GM10248 (cell line): ENCODE measurements at regions of chr3 and their contacts with region 1.

Region 1: DNA sequence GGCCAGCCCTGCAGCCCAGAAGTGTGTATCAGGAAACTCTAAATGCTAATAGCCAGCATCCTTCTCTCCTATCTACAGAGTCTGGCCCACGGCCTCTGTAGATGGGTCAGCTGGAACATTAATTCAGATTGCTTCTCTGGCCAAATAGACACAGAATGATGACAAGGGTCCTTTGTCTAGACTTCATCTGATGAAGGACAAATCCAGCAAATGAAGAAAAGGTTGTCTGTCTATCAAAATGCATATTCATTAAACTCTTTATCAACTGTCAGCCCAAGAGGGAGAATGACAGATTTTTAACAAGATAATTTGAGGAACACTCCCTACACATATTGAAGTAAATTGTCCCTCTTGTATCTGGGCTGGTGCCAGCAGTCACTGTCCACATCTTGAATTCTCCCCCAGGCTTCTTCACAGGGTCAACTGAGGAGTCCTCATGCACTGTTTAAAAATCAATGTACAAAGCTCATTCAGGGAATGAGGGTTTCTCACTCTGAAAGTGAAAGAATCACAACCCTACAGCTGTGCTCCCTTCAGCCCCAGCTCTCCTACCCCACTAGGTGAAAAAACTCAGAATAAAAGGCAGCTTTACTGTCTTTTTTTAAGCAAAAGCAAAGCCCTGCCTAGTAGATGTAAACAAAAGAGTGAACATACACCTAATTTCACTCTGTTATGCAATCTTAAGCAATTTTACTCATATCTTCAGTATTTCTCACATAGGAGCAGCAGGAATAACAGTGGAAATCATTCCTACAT is 507.7 kb downstream of the IGSF11 start:
- DNase-seq: peak; percentile 10
- CTCF ChIP-seq: no peak

Region 2: GRCh38 chr3:118511402-118511801 is 15.5 kb before region 1 on chr3:
- CTCF ChIA-PET with region 1: interaction called, 10 read pairs
- POLR2A ChIA-PET with region 1: no interaction called
- DNase-seq: no peak
- CTCF ChIP-seq: no peak

Region 3: DNA sequence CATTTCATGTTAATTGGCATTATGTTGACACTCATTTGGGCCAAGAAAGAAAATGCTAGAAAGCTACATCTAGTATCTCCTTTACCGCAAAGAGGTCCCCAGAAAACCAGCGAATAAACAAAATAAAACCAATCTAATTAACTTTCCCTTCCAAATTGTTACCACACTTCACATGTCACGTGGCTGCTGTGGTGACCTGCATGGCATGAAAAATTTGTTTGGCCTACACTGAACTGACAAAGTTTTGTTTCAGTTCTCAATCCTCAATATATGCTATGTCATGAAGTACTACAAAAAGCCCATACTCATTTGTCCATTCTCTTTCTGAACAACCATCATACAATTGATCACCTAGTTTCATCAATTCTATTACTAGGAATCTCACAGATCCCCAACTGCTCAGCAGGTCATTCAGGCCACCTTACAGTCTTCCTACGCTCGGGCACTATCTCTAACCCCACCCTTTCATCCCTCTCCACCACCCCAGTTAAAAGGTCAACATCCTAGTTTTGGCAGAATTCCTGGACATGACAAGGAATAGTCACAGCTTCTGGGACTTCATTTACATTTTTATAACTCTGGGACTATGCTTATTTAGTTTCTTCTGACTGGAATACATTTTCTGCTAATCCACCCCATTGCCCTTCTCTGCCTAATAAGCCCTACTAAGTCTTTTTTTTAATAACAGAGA is 27.4 kb after region 1 on chr3:
- CTCF ChIA-PET with region 1: no interaction called
- POLR2A ChIA-PET with region 1: no interaction called
- DNase-seq: no peak
- CTCF ChIP-seq: no peak